ENCODE measurements at regions of chr7 and their contacts with region 1.

Region 1: DNA sequence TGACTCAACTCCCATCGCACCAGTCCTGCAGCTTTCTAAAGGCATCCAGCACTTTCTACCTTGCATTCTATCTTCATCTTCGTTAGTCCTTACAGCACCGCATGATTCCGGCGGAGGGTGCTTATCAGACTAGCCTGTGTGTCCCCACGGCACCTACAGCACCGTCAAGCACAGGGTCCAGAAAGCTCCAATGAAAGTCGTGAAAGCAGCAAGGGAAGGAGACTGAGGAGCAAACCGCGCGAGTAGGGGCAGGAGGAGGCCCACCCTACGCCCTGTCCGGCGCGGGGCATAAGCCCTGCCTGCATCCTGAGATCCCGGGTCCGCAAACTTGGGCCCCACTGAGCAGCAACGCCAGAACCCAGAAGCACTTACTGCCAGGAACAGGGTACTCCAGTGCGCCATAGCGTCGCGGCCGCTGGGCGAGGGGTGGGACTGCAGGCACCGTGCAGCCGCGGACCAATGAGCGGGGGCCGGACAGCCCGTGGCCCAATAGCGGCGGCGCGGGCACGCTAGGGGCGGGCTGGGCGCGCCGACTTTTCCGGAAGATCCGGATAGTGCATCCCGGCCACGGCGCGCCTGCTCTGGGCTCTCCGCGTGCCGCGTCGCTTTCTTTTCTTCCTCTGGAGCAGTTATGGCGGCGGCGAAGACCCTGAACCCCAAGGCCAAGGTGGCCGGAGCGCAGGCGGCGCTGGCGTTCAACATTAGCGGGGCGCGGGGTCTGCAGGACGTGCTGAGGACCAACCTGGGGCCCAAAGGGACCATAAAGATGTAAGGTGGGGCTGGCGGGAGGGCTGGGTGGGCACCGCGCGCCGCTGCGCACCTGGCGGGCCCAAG is 122.1 kb upstream of the VKORC1L1 start:
- DNase-seq: peak; percentile 92
- H3K4me3 Mint-ChIP-seq: peak overlapping the region; percentile 96
- H3K27ac Mint-ChIP-seq: peak overlapping the region; percentile 98
- H3K4me1 Mint-ChIP-seq: peaks cover 29% of the 10 kb centered on the region
- H3K27me3 Mint-ChIP-seq: no peaks in the 10 kb centered on the region

Region 2: GRCh38 chr7:65373608-65374351 is 376.9 kb before region 1 on chr7 and contains the start of gene ZNF92:
- CTCF ChIA-PET with region 1: no interaction called
- POLR2A ChIA-PET with region 1: interaction called, 3 read pairs
- intact Hi-C with region 1: loop called (anchors 10 kb)
- DNase-seq: peak; percentile 98
- H3K4me3 Mint-ChIP-seq: peak within 1 kb of the TSS; percentile 95
- H3K27ac Mint-ChIP-seq: peak within 1 kb of the TSS; percentile 88
- H3K4me1 Mint-ChIP-seq: peaks cover 30% of the 10 kb centered on the region
- H3K27me3 Mint-ChIP-seq: no peaks in the 10 kb centered on the region
- total RNA-seq, gene ZNF92: 12.9 to 13.9 TPM

Region 3: GRCh38 chr7:65722345-65722792 is 28.4 kb before region 1 on chr7:
- CTCF ChIA-PET with region 1: interaction called, 4 read pairs
- POLR2A ChIA-PET with region 1: no interaction called
- intact Hi-C with region 1: loop called (anchors 1 kb)
- DNase-seq: peak; percentile 78
- H3K4me3 Mint-ChIP-seq: no peak overlapping the region
- H3K27ac Mint-ChIP-seq: no peak overlapping the region
- H3K4me1 Mint-ChIP-seq: no peaks in the 10 kb centered on the region
- H3K27me3 Mint-ChIP-seq: no peaks in the 10 kb centered on the region

Region 4: GRCh38 chr7:65872776-65873581 is 122.3 kb after region 1 on chr7 and contains the start of gene VKORC1L1:
- CTCF ChIA-PET with region 1: no interaction called
- POLR2A ChIA-PET with region 1: no interaction called
- intact Hi-C with region 1: loop called (anchors 1 kb)
- DNase-seq: peak; percentile 97
- H3K4me3 Mint-ChIP-seq: peak within 1 kb of the TSS; percentile 85
- H3K27ac Mint-ChIP-seq: no peak within 1 kb of the TSS
- H3K4me1 Mint-ChIP-seq: peaks cover 7% of the 10 kb centered on the region
- H3K27me3 Mint-ChIP-seq: no peaks in the 10 kb centered on the region
- total RNA-seq, gene VKORC1L1: 14.9 to 16.1 TPM